ENCODE measurements at regions of chr1 and their contacts with region 1.

Region 1: GRCh38 chr1:17045634-17046333 is 8.0 kb downstream of the SDHB start:
- DNase-seq: no peak
- H3K4me3 ChIP-seq: peak overlapping the region in 2 of 4 donors; percentile 1 to 13
- H3K27ac ChIP-seq: peak overlapping the region in 3 of 4 donors; percentile 3 to 36 (median 7)
- H3K4me1 ChIP-seq: peaks cover 0 to 17% (median 4%) of the 10 kb centered on the region in 4 donors
- H3K27me3 ChIP-seq: no peaks in the 10 kb centered on the region
- CTCF ChIP-seq: peak; percentile 69 to 84 (median 71)
- EP300 ChIP-seq: no peak
- POLR2A ChIP-seq: no peak

Region 2: GRCh38 chr1:16960560-16961296 is 85.1 kb before region 1 on chr1:
- in situ Hi-C with region 1: loop called in 3 of 4 experiments (anchors 5 to 10 kb)
- intact Hi-C with region 1: no loop called
- DNase-seq: peak; percentile 94
- H3K4me3 ChIP-seq: peak overlapping the region in 3 of 4 donors; percentile 34 to 44 (median 41)
- H3K27ac ChIP-seq: peak overlapping the region; percentile 51 to 72 (median 62)
- H3K4me1 ChIP-seq: peaks cover 0 to 13% (median 4%) of the 10 kb centered on the region in 4 donors
- H3K27me3 ChIP-seq: no peaks in the 10 kb centered on the region
- CTCF ChIP-seq: peak; percentile 69 to 82 (median 79)
- EP300 ChIP-seq: no peak
- POLR2A ChIP-seq: no peak